Activated naive CD4-positive, alpha-beta T cell treated with anti-CD3 and anti-CD28 coated beads for 36 hours (primary cell): ENCODE measurements at regions of chr19 and their contacts with region 1.

Region 1: DNA sequence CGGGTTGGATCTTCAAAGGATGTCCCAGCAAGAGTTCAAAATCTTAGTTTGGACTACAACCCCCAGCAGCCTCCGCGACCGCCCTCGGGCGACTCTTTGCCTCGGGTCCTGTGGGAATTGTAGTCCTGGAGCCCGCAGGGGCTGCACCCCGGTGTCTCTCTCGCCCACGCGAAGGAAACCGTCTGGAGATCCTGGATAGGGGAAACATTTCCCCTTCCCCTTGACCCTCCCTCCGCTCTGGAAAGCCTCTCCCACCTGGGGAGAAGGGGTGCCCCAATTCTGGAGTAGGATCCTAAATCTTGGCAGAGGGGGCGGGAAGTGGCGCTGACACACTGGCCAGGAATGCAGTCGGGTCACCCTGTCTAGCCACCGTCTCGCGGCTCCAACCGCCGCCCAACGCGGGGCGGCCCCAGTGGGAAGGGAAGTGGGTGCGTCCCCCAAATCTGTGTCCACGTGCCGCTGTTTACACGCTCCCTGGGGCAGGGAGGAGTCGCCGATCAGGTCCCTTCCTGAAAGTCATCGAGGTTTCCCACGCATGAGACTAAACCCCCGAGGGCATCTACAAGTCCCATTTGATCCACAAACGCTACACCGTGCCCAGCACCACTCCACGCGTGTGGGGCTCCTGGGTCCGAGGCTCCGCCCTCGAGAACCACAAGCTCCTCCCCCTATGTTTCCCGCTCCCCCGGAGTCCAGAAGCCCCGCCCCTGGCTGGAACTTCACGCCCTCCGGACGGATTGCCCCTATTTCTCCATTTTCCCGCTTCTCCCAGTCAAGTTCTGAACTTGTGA is 761 bp upstream of the PPP1R13L start:
- DNase-seq: peak; percentile 90
- H3K4me3 Mint-ChIP-seq: peak overlapping the region; percentile 93
- H3K27ac Mint-ChIP-seq: peak overlapping the region; percentile 93
- H3K4me1 Mint-ChIP-seq: peaks cover 44% of the 10 kb centered on the region
- H3K27me3 Mint-ChIP-seq: peaks cover 30% of the 10 kb centered on the region

Region 2: DNA sequence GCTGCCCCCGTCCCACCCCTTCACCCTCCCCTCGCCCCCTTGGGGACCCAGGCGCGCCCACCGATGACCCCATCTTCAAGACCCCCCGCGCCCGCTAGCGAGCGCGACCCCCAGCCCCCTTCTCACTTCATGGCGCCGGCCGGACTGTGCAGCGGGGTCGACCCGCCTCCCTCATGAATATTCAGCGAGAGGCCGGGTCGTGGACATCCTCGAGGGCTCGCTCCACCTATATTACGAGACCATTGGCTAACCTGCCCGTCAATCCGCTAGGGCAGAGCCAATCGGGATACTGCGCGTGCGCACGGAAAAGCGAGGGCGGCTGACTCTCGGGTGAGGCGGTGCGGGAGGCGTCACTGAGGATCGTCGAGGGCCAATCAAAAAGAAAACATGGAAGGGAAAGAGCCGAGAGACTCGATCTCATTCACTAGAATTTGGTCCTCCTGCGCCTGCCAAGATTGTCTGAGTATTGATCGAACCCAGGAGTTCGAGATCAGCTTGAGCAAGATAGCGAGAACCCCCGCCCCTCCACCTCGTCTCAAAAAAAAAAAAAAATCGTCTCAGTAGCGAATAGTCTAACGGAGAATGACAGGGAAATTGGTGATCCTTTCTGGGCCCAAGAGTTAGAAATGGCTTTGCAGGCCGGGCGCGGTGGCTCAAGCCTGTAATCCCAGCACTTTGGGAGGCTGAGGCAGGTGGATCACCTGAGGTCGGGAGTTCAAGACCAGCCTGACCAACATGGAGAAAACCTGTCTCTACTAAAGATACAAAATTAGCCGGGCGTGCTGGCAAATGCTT is 35.0 kb before region 1 on chr19 and contains the start of gene ERCC2:
- CTCF ChIA-PET with region 1: interaction called, 5 read pairs
- intact Hi-C with region 1: loop called (anchors 1 kb)
- DNase-seq: peak; percentile 100
- H3K4me3 Mint-ChIP-seq: peak within 1 kb of the TSS; percentile 93
- H3K27ac Mint-ChIP-seq: peak within 1 kb of the TSS; percentile 91
- H3K4me1 Mint-ChIP-seq: peaks cover 5% of the 10 kb centered on the region
- H3K27me3 Mint-ChIP-seq: no peaks in the 10 kb centered on the region
- total RNA-seq, gene ERCC2: 20.6 to 22.9 TPM

Region 3: GRCh38 chr19:45423589-45424190 is 18.1 kb after region 1 on chr19 and contains the start of gene ERCC1:
- CTCF ChIA-PET with region 1: interaction called, 5 read pairs
- intact Hi-C with region 1: loop called (anchors 1 kb)
- DNase-seq: peak; percentile 90
- H3K4me3 Mint-ChIP-seq: peak within 1 kb of the TSS; percentile 94
- H3K27ac Mint-ChIP-seq: peak within 1 kb of the TSS; percentile 90
- H3K4me1 Mint-ChIP-seq: peaks cover 63% of the 10 kb centered on the region
- H3K27me3 Mint-ChIP-seq: peaks cover 3% of the 10 kb centered on the region
- total RNA-seq, gene ERCC1: 28.9 to 30.7 TPM

Region 4: GRCh38 chr19:45469132-45469944 is 63.7 kb after region 1 on chr19:
- CTCF ChIA-PET with region 1: interaction called, 3 read pairs
- intact Hi-C with region 1: loop called (anchors 1 kb)
- DNase-seq: peak; percentile 91
- H3K4me3 Mint-ChIP-seq: peak overlapping the region; percentile 77
- H3K27ac Mint-ChIP-seq: peak overlapping the region; percentile 75
- H3K4me1 Mint-ChIP-seq: peaks cover 42% of the 10 kb centered on the region
- H3K27me3 Mint-ChIP-seq: peaks cover 26% of the 10 kb centered on the region

Region 5: DNA sequence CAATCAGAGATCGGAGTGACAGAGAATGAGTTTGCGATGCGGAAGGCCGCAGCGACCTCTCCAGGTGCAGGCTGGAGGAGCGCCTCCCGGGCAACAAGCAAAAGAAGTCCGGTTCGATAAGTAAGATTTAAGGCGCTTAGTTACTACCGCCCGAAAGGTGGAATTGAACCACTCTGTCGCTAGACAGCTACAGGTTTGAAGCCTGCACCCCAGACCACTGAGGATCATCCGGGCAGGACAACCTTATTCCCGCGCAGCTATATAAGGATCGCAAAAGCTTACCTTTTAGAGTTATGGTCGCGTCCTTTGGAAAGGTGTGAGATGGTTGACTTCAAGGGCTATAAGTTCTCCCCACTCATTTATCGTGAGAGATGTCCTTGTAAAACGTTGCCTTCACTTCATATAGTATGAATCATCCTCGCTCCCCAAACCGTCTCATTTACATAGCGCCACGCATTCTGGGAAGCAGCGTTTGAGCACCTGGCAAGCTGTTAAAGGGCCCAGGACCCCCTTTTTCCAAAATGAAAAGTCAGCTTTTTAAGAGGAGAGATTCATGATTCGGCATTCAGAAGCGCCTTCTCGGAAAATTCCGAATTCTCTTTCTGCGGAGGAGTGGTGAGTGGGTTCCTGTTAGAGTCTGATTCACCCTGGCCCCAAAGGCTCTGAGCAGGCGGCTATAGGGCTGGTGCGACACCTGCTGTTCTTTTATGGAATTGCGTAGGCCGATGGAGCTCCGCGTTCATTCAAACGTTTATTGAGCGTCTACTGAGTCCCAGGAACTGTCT is 73.0 kb after region 1 on chr19:
- CTCF ChIA-PET with region 1: interaction called, 13 read pairs
- intact Hi-C with region 1: loop called (anchors 1 kb)
- DNase-seq: peak; percentile 96
- H3K4me3 Mint-ChIP-seq: peak overlapping the region; percentile 54
- H3K27ac Mint-ChIP-seq: peak overlapping the region; percentile 95
- H3K4me1 Mint-ChIP-seq: peaks cover 22% of the 10 kb centered on the region
- H3K27me3 Mint-ChIP-seq: peaks cover 2% of the 10 kb centered on the region

Region 6: GRCh38 chr19:45485305-45486077 is 79.9 kb after region 1 on chr19:
- CTCF ChIA-PET with region 1: interaction called, 4 read pairs
- intact Hi-C with region 1: loop called (anchors 1 kb)
- DNase-seq: peak; percentile 99
- H3K4me3 Mint-ChIP-seq: peak overlapping the region; percentile 81
- H3K27ac Mint-ChIP-seq: peak overlapping the region; percentile 46
- H3K4me1 Mint-ChIP-seq: peaks cover 4% of the 10 kb centered on the region
- H3K27me3 Mint-ChIP-seq: no peaks in the 10 kb centered on the region

Region 7: DNA sequence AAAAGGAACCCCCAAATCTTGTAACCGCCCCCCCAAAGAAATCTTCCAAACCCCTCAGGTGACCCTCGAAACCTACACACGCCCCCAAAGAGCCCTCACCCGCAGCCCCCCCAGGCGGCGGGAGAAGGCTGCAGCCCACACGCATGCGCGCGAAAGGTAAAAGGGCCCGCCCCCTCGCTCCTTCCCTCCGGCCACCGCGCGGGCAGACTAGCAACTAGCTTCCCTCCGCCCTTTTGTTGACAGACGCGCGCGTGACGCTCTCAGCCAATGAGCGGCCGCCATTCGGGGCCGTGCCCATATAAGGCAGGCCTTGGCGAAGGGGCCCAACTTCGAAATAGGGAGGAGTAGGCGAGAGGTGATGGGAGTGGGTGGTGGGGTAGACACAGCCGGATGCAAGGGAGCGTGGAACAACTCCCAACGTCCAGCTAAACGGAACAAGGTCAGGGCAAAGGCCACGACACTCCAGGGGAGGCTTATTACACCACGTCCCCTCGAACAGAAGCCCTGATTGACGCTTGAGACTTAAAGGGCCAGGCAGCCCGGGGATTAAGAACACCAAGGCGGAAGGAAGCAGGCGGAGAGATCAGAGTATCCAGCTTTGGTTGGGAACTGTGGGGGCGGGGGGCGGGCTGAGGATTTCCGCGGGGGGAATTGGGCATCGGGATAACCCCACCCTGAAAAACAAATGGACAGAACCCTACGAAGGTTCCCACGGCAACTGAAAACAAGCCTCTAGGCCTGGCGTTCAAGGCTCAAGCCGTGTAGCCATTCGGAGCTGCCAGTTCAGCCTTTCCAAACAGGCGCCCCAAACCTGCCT is 311.7 kb after region 1 on chr19:
- CTCF ChIA-PET with region 1: interaction called, 3 read pairs
- intact Hi-C with region 1: loop called (anchors 1 kb)
- DNase-seq: peak; percentile 99
- H3K4me3 Mint-ChIP-seq: peak overlapping the region; percentile 96
- H3K27ac Mint-ChIP-seq: peak overlapping the region; percentile 97
- H3K4me1 Mint-ChIP-seq: peaks cover 41% of the 10 kb centered on the region
- H3K27me3 Mint-ChIP-seq: no peaks in the 10 kb centered on the region